Activated CD4-positive, alpha-beta memory T cell treated with anti-CD3 and anti-CD28 coated beads for 36 hours (primary cell): ENCODE measurements at regions of chrX and their contacts with region 1.

Region 1: GRCh38 chrX:110407910-110408545 is 49.4 kb downstream of the RTL9 start:
- DNase-seq: peak; percentile 31
- H3K4me3 Mint-ChIP-seq: no peak overlapping the region
- H3K27ac Mint-ChIP-seq: no peak overlapping the region
- H3K4me1 Mint-ChIP-seq: peaks cover 3% of the 10 kb centered on the region
- H3K27me3 Mint-ChIP-seq: no peaks in the 10 kb centered on the region

Region 2: GRCh38 chrX:110156167-110156754 is 251.8 kb before region 1 on chrX:
- CTCF ChIA-PET with region 1: interaction called, 522 read pairs
- POLR2A ChIA-PET with region 1: no interaction called
- intact Hi-C with region 1: loop called (anchors 1 kb)
- DNase-seq: no peak
- H3K4me3 Mint-ChIP-seq: no peak overlapping the region
- H3K27ac Mint-ChIP-seq: no peak overlapping the region
- H3K4me1 Mint-ChIP-seq: peaks cover 12% of the 10 kb centered on the region
- H3K27me3 Mint-ChIP-seq: no peaks in the 10 kb centered on the region

Region 3: GRCh38 chrX:110317820-110318658 is 90.0 kb before region 1 on chrX and contains the start of gene AMMECR1:
- CTCF ChIA-PET with region 1: interaction called, 7 read pairs
- POLR2A ChIA-PET with region 1: interaction called, 3 read pairs
- intact Hi-C with region 1: loop called (anchors 2 kb)
- DNase-seq: peak; percentile 84
- H3K4me3 Mint-ChIP-seq: peak within 1 kb of the TSS; percentile 93
- H3K27ac Mint-ChIP-seq: peak within 1 kb of the TSS; percentile 95
- H3K4me1 Mint-ChIP-seq: peaks cover 27% of the 10 kb centered on the region
- H3K27me3 Mint-ChIP-seq: no peaks in the 10 kb centered on the region
- total RNA-seq, gene AMMECR1: 8.0 to 8.9 TPM

Region 4: GRCh38 chrX:110341189-110342035 is 66.6 kb before region 1 on chrX:
- CTCF ChIA-PET with region 1: no interaction called
- POLR2A ChIA-PET with region 1: no interaction called
- intact Hi-C with region 1: loop called (anchors 10 kb)
- DNase-seq: no peak
- H3K4me3 Mint-ChIP-seq: no peak overlapping the region
- H3K27ac Mint-ChIP-seq: peak overlapping the region; percentile 69
- H3K4me1 Mint-ChIP-seq: peaks cover 7% of the 10 kb centered on the region
- H3K27me3 Mint-ChIP-seq: no peaks in the 10 kb centered on the region